CD4-positive, alpha-beta memory T cell (primary cell): ENCODE measurements at regions of chr11 and their contacts with region 1.

Region 1: GRCh38 chr11:6419009-6419631 is at the start of gene APBB1:
- DNase-seq: peak; percentile 67 to 81 (median 79)
- H3K4me3 ChIP-seq: peak within 1 kb of the TSS; percentile 43 to 74
- H3K4me3 Mint-ChIP-seq: peak within 1 kb of the TSS in 6 of 8 donors; percentile 81 to 89 (median 86)
- H3K27ac ChIP-seq: peak within 1 kb of the TSS; percentile 73
- H3K27ac Mint-ChIP-seq: peak within 1 kb of the TSS; percentile 74 to 90 (median 84)
- H3K4me1 ChIP-seq: peaks cover 50% of the 10 kb centered on the region
- H3K4me1 Mint-ChIP-seq: peaks cover 5 to 12% (median 8%) of the 10 kb centered on the region in 4 donors
- H3K27me3 ChIP-seq: no peaks in the 10 kb centered on the region
- H3K27me3 Mint-ChIP-seq: peaks cover 6 to 15% of the 10 kb centered on the region in 2 donors
- total RNA-seq, gene APBB1: 93.2 to 93.5 TPM

Region 2: GRCh38 chr11:6402561-6402981 is 16.5 kb before region 1 on chr11:
- CTCF ChIA-PET with region 1: interaction called, 40 read pairs
- POLR2A ChIA-PET with region 1: interaction called, 503 read pairs
- intact Hi-C with region 1: loop called (anchors 1 kb)
- DNase-seq: peak; percentile 89 to 95 (median 90)
- H3K4me3 ChIP-seq: peak overlapping the region; percentile 40 to 53
- H3K4me3 Mint-ChIP-seq: peak overlapping the region; percentile 80 to 98 (median 84)
- H3K27ac ChIP-seq: peak overlapping the region; percentile 69
- H3K27ac Mint-ChIP-seq: peak overlapping the region; percentile 96 to 99 (median 97)
- H3K4me1 ChIP-seq: peaks cover 72% of the 10 kb centered on the region
- H3K4me1 Mint-ChIP-seq: peaks cover 62 to 98% (median 80%) of the 10 kb centered on the region in 4 donors
- H3K27me3 ChIP-seq: no peaks in the 10 kb centered on the region
- H3K27me3 Mint-ChIP-seq: no peaks in the 10 kb centered on the region

Region 3: GRCh38 chr11:6437993-6438392 is 18.9 kb after region 1 on chr11:
- CTCF ChIA-PET with region 1: interaction called, 31 read pairs
- POLR2A ChIA-PET with region 1: interaction called, 11 read pairs
- intact Hi-C with region 1: loop called (anchors 2 kb)
- DNase-seq: peak in 1 of 5 donors; percentile 11
- H3K4me3 ChIP-seq: no peak overlapping the region
- H3K4me3 Mint-ChIP-seq: no peak overlapping the region
- H3K27ac ChIP-seq: no peak overlapping the region
- H3K27ac Mint-ChIP-seq: no peak overlapping the region
- H3K4me1 ChIP-seq: peaks cover 29% of the 10 kb centered on the region
- H3K4me1 Mint-ChIP-seq: no peaks in the 10 kb centered on the region
- H3K27me3 ChIP-seq: no peaks in the 10 kb centered on the region
- H3K27me3 Mint-ChIP-seq: no peaks in the 10 kb centered on the region

Region 4: GRCh38 chr11:6481012-6481923 is 62.1 kb after region 1 on chr11 and contains the starts of genes ARFIP2 and TIMM10B:
- CTCF ChIA-PET with region 1: interaction called, 3 read pairs
- POLR2A ChIA-PET with region 1: interaction called, 16 read pairs
- intact Hi-C with region 1: loop called (anchors 2 kb)
- DNase-seq: peak; percentile 93 to 98 (median 95)
- H3K4me3 ChIP-seq: peak within 1 kb of the TSS; percentile 83 to 97
- H3K4me3 Mint-ChIP-seq: peak within 1 kb of the TSS; percentile 93 to 98 (median 96)
- H3K27ac ChIP-seq: peak within 1 kb of the TSS; percentile 90
- H3K27ac Mint-ChIP-seq: peak within 1 kb of the TSS; percentile 95 to 99 (median 98)
- H3K4me1 ChIP-seq: peaks cover 46% of the 10 kb centered on the region
- H3K4me1 Mint-ChIP-seq: peaks cover 26 to 44% (median 36%) of the 10 kb centered on the region in 4 donors
- H3K27me3 ChIP-seq: no peaks in the 10 kb centered on the region
- H3K27me3 Mint-ChIP-seq: no peaks in the 10 kb centered on the region
- total RNA-seq, gene ARFIP2: 53.9 to 56.9 TPM
- total RNA-seq, gene TIMM10B: 54.7 to 60.3 TPM